Sigmoid colon (tissue), 7 donors: ENCODE measurements at regions of chr4 and their contacts with region 1.

Region 1: GRCh38 chr4:87838890-87839591 is 6.3 kb downstream of the MEPE start:
- DNase-seq: peak; percentile 69
- H3K4me3 ChIP-seq: no peak overlapping the region
- H3K27ac ChIP-seq: peak overlapping the region in 1 of 4 donors; percentile 13
- H3K4me1 ChIP-seq: peaks cover 0 to 12% (median 5%) of the 10 kb centered on the region in 4 donors
- H3K27me3 ChIP-seq: no peaks in the 10 kb centered on the region
- CTCF ChIP-seq: peak in 3 of 4 experiments; percentile 54 to 76 (median 61)
- EP300 ChIP-seq: no peak
- POLR2A ChIP-seq: no peak

Region 2: GRCh38 chr4:87679449-87680169 is 159.4 kb before region 1 on chr4:
- intact Hi-C with region 1: loop called (anchors 5 kb)
- DNase-seq: peak; percentile 78
- H3K4me3 ChIP-seq: no peak overlapping the region
- H3K27ac ChIP-seq: no peak overlapping the region
- H3K4me1 ChIP-seq: no peaks in the 10 kb centered on the region
- H3K27me3 ChIP-seq: no peaks in the 10 kb centered on the region
- CTCF ChIP-seq: peak; percentile 51 to 74 (median 60)
- EP300 ChIP-seq: no peak
- POLR2A ChIP-seq: no peak

Region 3: DNA sequence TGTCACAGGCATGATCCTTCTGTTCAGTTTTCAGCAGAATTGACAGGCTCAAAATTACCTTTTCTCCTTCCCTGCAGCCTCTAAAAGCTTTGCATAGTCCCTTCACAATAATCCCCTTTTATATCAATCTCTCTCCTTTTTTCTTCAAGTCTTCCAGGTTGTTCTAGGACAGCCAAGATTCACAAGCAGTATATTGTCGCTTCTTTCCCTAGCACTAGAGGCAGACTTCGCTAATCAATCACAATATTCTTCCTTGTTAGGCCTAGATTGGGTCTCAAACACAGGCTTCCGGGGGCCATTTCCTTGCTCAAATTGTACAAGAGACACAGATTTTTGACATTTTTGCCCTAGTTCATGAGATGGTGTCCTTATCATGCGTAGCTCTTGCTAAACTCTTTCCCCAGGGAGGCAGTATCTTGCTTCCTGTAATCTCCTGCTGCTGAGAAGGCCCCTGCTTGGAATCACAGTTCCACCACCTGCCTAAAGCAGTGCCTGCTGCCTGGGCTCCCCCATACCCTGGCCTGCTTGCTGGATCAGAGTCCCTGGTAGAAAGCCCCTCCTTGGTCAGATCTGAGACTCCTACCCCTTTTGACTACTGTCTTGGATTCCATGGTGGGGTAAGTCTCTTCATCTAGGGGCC is 131.6 kb before region 1 on chr4:
- intact Hi-C with region 1: no loop called
- DNase-seq: no peak
- H3K4me3 ChIP-seq: no peak overlapping the region
- H3K27ac ChIP-seq: no peak overlapping the region
- H3K4me1 ChIP-seq: no peaks in the 10 kb centered on the region
- H3K27me3 ChIP-seq: no peaks in the 10 kb centered on the region
- CTCF ChIP-seq: no peak
- EP300 ChIP-seq: no peak
- POLR2A ChIP-seq: no peak

Region 4: DNA sequence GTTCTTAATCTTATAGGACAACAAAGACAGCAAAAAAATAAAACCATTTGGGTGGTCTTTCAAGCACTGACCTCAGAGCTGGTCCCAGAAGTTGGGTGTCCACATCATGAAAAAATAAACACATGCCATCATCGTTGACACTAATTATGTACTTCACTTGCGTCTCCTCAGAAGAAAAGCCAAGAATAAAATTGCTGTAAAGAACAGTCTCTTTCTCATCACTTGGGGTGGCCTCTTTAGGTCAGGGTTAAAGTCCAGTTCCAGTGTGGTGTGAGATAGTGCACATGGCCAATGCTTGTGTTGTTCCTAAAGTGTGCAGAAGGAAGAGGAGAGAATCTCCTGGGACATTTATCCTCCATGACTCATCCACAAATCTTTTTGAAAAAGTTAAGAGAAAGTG is 89.2 kb before region 1 on chr4:
- intact Hi-C with region 1: no loop called
- DNase-seq: no peak
- H3K4me3 ChIP-seq: no peak overlapping the region
- H3K27ac ChIP-seq: no peak overlapping the region
- H3K4me1 ChIP-seq: no peaks in the 10 kb centered on the region
- H3K27me3 ChIP-seq: no peaks in the 10 kb centered on the region
- CTCF ChIP-seq: no peak
- EP300 ChIP-seq: no peak
- POLR2A ChIP-seq: no peak